ENCODE measurements at regions of chr3 and their contacts with region 1.

Region 1: GRCh38 chr3:133268726-133269134 is 131.1 kb upstream of the BFSP2 start:
- DNase-seq: no peak
- ATAC-seq: no peak

Region 2: GRCh38 chr3:133211449-133211848 is 57.3 kb before region 1 on chr3:
- intact Hi-C with region 1: loop called (anchors 10 kb)
- DNase-seq: no peak
- ATAC-seq: no peak